Activated T-helper 2 cell treated with anti-CD3 and anti-CD28 coated beads, Interferon-gamma antibody, Interleukin-2, Interleukin-4, amounts not matched to agents 10 μg/mL and 5 μg/mL and 100 μg/mL, durations not matched to agents 14 hours and 24 hours and 36 hours (primary cell): ENCODE measurements at regions of chr7 and their contacts with region 1.

Region 1: DNA sequence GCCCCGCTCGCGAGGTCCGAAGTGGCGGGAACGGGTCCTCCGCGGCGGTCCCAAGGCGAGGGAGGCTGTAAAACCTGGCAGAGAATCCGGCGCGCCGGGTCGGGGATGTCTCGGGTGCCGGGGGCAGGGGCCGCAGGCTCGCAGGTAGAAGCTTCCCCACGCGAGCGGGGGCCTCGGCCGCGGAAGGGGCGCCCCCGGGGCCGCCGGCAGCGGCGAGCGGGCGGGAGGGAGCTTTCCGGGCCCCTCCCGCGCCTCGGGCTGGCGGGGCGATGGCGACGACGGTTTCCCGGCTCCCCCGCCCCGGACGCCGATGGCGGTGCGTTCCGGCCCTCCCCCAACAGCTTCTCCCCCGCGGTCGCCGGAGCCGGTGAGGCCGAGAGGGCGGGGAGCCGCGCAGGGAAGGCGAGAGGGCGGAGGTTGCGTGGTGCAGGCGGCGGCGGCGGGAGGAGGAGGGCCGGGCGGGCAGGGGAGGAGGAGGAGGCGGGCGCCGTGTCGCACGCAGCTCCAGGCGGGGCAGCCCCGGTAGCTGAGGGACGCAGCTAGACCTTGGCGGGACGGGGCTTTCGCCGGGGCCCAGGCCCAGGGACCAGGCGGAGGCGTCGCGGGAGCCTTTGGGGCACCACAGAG is at the start of gene CUL1:
- DNase-seq: peak; percentile 83
- H3K4me3 Mint-ChIP-seq: peak within 1 kb of the TSS; percentile 91
- H3K27ac Mint-ChIP-seq: peak within 1 kb of the TSS; percentile 95
- H3K4me1 Mint-ChIP-seq: peaks cover 57% of the 10 kb centered on the region
- H3K27me3 Mint-ChIP-seq: no peaks in the 10 kb centered on the region
- total RNA-seq, gene CUL1: 69.4 and 74.5 TPM in 2 replicates

Region 2: DNA sequence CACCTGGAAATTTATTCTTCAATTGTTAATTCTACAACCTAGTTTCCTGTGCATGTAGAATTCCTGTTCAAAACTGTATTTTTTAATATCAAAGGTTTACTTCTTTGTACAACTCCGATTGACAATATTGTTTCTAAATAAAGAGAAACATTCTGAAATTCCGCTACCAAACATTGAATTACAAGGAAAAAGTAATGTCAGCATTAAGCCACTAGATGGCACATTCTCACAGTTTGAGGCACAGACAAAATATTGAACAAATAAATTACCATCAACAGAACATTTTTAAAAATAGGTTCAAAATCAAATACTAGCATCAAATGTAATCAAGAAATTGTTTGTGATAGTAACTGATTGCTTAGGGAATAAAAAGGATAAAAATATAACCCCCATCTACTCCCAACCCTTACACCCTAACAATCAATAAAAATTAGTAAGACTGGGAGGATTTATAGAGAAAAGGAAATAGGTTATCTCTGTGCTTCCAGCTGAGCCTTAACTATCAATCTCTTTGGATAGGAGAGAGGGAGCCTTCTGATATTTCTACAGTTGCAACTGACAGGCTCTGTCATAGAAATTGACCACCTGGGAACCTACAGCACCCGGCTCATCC is 194.5 kb before region 1 on chr7:
- intact Hi-C with region 1: loop called (anchors 1 kb)
- DNase-seq: no peak
- H3K4me3 Mint-ChIP-seq: no peak overlapping the region
- H3K27ac Mint-ChIP-seq: no peak overlapping the region
- H3K4me1 Mint-ChIP-seq: peaks cover 23% of the 10 kb centered on the region
- H3K27me3 Mint-ChIP-seq: peaks cover 32% of the 10 kb centered on the region

Region 3: DNA sequence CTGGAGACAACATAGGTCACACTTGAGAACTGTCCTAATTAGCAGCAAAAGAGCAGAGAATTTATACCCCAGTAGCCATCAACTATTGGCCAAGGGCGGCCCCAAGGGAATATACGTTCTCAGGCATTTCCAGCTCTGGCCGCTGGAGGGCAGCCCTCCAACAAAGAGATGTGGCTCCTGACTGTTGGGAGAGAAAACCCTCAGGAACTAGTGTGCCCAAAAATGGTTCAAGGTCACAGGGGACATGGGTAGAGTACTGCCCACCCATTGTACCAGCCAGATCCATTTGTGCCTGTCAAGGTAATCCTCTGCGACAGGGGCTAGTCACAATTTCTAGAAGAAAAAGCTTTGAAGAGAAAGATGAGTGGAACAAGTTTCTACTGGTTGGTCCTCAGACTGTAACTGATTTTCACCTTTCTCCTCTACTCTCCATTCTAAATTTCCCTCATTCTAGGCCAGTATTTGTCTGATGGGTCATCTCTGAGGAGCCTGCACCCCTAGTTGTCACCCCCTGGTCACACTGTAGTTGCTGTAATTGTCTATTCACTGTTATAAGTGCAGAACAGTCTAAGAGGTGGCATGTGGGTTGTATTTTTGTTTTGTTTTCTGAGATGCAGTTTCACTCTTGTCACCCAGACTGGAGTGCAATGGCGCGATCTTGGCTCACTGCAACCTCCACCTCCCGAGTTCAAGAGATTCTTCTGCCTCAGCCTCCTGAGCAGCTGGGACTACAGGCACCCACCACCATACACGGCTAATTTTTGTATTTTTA is 122.7 kb before region 1 on chr7:
- intact Hi-C with region 1: loop called (anchors 2 kb)
- DNase-seq: peak; percentile 57
- H3K4me3 Mint-ChIP-seq: no peak overlapping the region
- H3K27ac Mint-ChIP-seq: no peak overlapping the region
- H3K4me1 Mint-ChIP-seq: peaks cover 24% of the 10 kb centered on the region
- H3K27me3 Mint-ChIP-seq: peaks cover 19% of the 10 kb centered on the region

Region 4: DNA sequence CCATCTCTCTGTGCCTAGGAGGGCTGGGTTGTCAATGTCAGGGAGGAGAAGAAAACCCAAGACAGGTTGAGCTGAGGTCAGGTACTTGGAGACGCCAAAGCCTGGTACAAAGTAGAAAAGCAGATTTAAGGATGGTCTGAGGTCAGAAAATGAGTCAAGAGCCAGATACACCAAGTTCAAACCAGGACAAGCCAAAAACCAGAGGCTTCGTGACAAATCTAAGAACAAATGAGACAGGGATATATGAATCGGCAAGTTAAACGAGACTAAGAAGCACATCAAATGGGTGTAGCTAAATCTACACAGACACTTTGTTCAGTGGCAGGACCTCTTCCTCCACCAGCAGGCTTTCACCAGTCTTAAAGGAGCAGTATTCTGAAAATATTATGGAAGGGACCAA is 73.8 kb before region 1 on chr7:
- intact Hi-C with region 1: loop called (anchors 2 kb)
- DNase-seq: no peak
- H3K4me3 Mint-ChIP-seq: no peak overlapping the region
- H3K27ac Mint-ChIP-seq: no peak overlapping the region
- H3K4me1 Mint-ChIP-seq: peaks cover 46% of the 10 kb centered on the region
- H3K27me3 Mint-ChIP-seq: peaks cover 5% of the 10 kb centered on the region

Region 5: GRCh38 chr7:148856891-148857290 is 158.4 kb after region 1 on chr7:
- intact Hi-C with region 1: loop called (anchors 10 kb)
- DNase-seq: no peak
- H3K4me3 Mint-ChIP-seq: no peak overlapping the region
- H3K27ac Mint-ChIP-seq: peak overlapping the region; percentile 79
- H3K4me1 Mint-ChIP-seq: peaks cover 47% of the 10 kb centered on the region
- H3K27me3 Mint-ChIP-seq: no peaks in the 10 kb centered on the region

Region 6: DNA sequence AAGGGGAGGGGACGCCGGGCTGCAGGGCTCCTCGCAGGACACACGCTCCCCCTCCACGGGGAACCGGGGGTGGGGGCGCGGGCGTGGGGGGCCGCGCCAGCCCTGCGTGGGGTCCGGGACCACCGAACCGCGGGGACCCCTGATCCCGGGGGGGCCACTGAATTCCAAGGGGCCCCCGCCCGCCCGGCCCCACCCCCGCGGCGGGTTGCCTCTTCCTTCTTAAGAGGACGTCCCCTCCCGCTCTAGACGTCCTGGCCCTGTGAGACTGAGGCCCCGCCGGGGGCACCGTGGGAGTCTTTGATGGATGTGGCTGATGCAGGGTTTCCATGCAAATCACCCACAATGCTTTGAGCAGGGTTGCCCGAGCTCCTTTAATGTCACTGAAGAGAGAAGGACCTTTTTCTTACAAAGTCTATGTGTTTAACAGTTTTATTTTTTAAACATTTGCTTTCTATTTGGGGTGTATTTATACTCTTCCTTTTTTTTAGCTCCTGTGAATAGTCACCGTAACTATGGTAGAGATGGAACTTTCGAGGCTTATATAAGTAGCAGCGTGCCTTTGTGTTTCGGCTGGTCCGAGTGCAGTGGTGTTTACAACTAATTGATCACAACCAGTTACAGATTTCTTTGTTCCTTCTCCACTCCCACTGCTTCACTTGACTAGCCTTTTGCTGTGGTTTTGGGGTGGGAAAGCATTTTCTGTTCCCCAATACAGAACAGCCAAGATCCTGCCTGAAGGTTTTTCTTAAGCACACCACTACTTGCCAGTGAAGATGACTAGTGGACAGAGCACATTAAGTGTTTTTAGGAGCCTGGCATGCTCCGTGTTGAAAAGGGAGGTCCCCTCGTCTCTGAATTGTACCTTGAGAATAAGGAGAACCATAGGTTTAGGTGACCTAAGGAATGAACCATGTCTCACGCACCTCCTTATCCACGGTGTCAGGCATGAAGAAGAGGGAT is 285.0 kb after region 1 on chr7:
- intact Hi-C with region 1: loop called (anchors 5 kb)
- DNase-seq: peak; percentile 71
- H3K4me3 Mint-ChIP-seq: peak overlapping the region; percentile 97
- H3K27ac Mint-ChIP-seq: peak overlapping the region; percentile 85
- H3K4me1 Mint-ChIP-seq: peaks cover 39% of the 10 kb centered on the region
- H3K27me3 Mint-ChIP-seq: peaks cover 5% of the 10 kb centered on the region

Region 7: GRCh38 chr7:149873074-149873969 is 1174.8 kb after region 1 on chr7 and contains the start of gene ATP6V0E2:
- intact Hi-C with region 1: loop called (anchors 5 kb)
- DNase-seq: peak; percentile 91
- H3K4me3 Mint-ChIP-seq: peak within 1 kb of the TSS; percentile 89
- H3K27ac Mint-ChIP-seq: peak within 1 kb of the TSS; percentile 90
- H3K4me1 Mint-ChIP-seq: peaks cover 57% of the 10 kb centered on the region
- H3K27me3 Mint-ChIP-seq: no peaks in the 10 kb centered on the region
- total RNA-seq, gene ATP6V0E2: 50.2 and 54.3 TPM in 2 replicates